CD4-positive, alpha-beta memory T cell (primary cell): ENCODE measurements at regions of chr15 and their contacts with region 1.

Region 1: DNA sequence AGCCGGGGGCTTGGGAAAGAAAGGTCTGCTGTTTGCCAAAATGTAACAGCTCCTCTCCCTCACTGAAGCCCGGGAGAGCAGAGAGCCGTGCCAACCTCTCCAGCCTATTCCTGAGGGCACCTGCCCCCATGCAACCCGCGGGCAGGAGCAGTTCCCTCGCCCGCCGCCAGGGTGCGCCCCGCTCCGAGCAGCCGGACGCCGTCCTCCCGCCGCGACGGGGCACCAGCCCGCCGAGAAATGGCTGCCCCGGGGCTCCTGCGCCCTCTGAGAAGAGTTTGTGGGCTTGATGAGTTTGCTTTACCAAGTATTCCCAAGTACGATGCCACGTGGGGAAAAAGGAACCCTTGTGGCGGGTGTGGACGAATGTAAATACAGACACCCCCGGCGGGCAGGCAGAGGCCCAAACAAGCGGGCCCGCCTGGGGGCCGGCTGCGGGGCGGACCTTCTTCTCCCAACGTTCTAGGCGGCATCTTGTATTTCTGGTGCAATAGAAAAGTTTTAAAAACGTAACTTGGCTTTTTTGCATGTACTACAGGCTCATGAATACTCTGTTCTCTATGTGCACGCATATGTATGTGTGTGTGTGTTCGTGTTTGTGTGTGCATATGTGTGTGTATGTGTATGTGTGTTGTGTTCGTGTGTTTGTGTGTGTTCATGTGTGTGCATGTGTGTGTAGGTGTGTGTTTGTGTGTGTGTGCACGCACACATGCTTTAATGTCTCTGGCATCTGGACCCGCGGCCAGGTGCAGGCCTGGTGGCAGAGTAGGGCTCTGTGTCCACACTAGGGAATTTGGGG is 162.9 kb downstream of the CHSY1 start:
- DNase-seq: peak; percentile 53 to 79 (median 67)
- H3K4me3 ChIP-seq: no peak overlapping the region
- H3K4me3 Mint-ChIP-seq: peak overlapping the region in 1 of 8 donors; percentile 49
- H3K27ac ChIP-seq: no peak overlapping the region
- H3K27ac Mint-ChIP-seq: no peak overlapping the region
- H3K4me1 ChIP-seq: no peaks in the 10 kb centered on the region
- H3K4me1 Mint-ChIP-seq: peaks cover 0 to 2% (median 0%) of the 10 kb centered on the region in 4 donors
- H3K27me3 ChIP-seq: no peaks in the 10 kb centered on the region
- H3K27me3 Mint-ChIP-seq: peaks cover 0 to 6% of the 10 kb centered on the region in 2 donors

Region 2: DNA sequence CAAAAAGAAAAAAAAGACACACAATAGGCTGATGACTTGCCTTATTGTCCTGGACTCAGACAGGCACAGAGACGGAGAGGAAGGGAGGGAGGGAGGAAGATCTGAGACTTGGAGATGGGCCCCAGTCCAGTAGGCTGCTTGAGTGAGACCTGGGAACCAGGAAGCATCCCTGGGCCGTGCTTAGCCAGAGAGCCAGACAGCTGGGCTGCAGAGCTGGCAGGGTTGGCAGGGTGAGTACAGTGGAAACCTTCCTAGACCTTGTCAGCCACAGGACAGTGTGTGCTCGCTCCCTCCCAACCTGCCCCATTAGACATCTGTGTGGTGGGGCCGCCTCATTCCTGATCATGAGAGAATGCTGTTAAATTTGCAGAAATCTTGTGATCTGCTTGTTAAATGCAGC is 317.2 kb before region 1 on chr15:
- CTCF ChIA-PET with region 1: no interaction called
- POLR2A ChIA-PET with region 1: no interaction called
- intact Hi-C with region 1: no loop called
- DNase-seq: no peak
- H3K4me3 ChIP-seq: no peak overlapping the region
- H3K4me3 Mint-ChIP-seq: no peak overlapping the region
- H3K27ac ChIP-seq: no peak overlapping the region
- H3K27ac Mint-ChIP-seq: no peak overlapping the region
- H3K4me1 ChIP-seq: no peaks in the 10 kb centered on the region
- H3K4me1 Mint-ChIP-seq: no peaks in the 10 kb centered on the region
- H3K27me3 ChIP-seq: no peaks in the 10 kb centered on the region
- H3K27me3 Mint-ChIP-seq: peaks cover 0 to 6% of the 10 kb centered on the region in 2 donors

Region 3: DNA sequence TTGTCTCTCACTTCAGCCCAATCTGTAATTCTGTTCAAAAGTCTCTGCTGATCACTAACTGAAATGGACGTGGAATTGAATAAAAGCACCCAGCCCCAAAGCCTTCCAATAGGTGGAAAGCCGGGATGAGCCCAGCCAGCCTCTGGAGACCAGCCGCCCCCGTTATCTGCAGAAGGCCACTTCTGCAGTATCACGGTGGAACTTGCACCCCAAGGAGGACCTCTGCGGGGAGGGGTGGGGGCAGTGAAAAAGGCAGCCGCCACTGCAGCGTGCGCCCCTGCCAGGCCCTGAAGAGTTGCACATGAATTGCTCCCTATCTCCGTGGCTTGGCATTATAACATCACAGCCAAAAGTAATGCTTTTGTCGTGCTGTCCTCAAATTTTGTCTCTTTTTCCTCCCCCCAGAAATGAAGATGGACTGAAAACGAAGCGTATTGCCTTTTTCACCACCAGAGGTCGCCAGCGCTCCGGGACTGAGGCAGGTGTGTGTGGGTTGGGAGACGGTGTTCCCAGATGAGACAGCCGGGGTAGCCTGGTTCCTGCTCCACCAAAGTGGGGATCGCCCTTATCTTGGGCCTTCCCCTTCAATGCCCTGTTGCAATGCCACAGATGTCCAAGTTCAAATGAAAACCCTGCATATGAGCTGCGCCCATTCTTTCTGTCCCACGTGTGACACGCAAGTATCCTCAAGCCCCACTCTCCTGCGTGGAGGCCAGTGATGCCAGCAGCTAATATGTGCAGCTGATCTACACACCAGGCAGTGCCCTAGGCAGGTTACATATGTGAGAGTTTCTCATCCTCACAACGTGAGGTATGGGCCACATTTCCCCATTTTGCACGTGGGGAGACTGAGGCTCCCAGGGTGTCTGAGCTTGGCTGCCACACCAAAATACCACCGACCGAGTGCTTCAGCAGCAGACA is 73.8 kb before region 1 on chr15:
- CTCF ChIA-PET with region 1: interaction called, 15 read pairs
- POLR2A ChIA-PET with region 1: no interaction called
- intact Hi-C with region 1: no loop called
- DNase-seq: peak; percentile 42 to 53 (median 51)
- H3K4me3 ChIP-seq: no peak overlapping the region
- H3K4me3 Mint-ChIP-seq: no peak overlapping the region
- H3K27ac ChIP-seq: no peak overlapping the region
- H3K27ac Mint-ChIP-seq: no peak overlapping the region
- H3K4me1 ChIP-seq: no peaks in the 10 kb centered on the region
- H3K4me1 Mint-ChIP-seq: peaks cover 0 to 5% (median under 1%) of the 10 kb centered on the region in 4 donors
- H3K27me3 ChIP-seq: no peaks in the 10 kb centered on the region
- H3K27me3 Mint-ChIP-seq: peaks cover 5 to 6% of the 10 kb centered on the region in 2 donors

Region 4: DNA sequence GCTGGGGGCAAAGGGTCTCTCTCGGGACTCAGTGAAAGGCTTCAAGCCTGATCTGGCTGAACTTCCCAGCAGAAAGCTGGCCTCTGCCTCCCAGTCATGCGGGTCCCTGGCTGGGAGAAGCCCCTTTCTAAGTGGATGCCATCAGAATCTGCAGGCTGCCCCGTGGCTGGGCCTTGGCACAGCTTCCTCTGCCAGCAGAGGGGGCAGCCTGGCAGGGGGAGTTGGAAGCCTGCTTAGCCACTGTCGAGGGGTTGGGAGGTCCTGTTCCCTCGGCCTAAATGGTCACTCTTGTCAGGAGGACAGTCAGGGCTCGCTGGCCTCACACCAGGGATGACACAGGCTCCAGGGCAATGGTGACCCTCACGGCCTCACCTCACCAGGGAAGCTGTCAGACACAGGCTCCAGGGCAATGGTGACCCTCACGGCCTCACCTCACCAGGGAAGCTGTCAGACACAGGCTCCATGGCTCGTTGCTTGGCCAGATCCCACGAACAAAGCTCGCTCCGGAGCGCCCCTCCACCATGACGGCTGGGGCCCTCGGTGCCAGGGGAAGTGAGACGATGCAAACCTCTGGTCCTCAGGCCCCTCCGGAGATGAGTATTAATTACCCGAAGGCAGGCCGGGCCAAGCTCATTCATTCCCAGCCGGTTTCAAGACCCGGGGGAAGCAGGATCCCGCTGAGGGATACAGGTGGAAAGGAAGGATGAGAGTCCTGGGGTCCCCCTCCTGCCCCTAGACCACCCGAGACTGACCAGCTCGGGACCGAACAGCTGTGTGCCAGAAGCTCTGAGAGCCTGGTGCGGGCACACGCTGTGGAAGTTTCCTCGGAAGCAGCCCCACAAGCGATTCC is 11.8 kb after region 1 on chr15:
- CTCF ChIA-PET with region 1: interaction called, 12 read pairs
- POLR2A ChIA-PET with region 1: no interaction called
- intact Hi-C with region 1: no loop called
- DNase-seq: no peak
- H3K4me3 ChIP-seq: no peak overlapping the region
- H3K4me3 Mint-ChIP-seq: no peak overlapping the region
- H3K27ac ChIP-seq: no peak overlapping the region
- H3K27ac Mint-ChIP-seq: no peak overlapping the region
- H3K4me1 ChIP-seq: no peaks in the 10 kb centered on the region
- H3K4me1 Mint-ChIP-seq: peaks cover 0 to 1% (median 0%) of the 10 kb centered on the region in 4 donors
- H3K27me3 ChIP-seq: no peaks in the 10 kb centered on the region
- H3K27me3 Mint-ChIP-seq: peaks cover 1 to 3% of the 10 kb centered on the region in 2 donors

Region 5: DNA sequence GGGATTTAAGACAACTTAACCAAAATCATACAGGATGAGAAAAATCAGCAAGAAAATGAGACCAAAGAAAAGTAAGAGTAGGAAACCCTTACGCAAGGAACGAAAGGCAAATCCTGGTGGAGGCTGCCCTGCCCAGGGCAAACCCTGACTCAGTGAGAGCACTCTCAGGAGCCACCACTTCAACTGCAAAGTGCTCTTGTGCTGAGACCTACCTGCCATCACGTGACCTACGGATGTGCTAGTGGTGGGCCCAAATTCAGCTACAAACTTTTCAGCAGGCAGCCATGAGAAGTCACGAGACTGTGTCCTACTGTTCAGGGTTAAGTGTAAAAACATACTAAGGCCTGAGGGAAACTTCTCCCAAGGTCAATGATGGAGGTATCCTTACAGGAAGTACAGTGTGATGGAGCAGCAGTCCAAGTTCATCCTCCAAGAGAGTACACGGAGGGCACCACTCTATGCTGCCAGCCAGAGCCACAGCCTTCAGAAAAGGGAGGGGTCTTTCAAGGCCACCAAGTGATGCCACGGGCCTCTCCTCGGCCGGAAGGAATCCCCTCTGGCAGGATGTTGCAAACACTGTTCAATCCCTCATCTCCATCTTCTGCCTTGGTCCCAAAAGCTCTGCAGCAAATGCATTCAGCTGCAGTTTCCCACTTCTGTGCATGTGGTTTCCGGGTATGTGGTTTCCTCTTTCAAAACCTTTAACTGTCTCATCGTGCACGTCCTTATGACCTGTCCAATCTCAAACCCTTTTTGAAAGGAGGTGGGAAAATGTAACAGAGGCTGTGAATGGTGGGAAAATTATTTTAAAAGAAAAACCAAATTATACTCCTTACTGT is 153.4 kb after region 1 on chr15:
- CTCF ChIA-PET with region 1: interaction called, 19 read pairs
- POLR2A ChIA-PET with region 1: no interaction called
- intact Hi-C with region 1: no loop called
- DNase-seq: peak; percentile 78 to 88 (median 80)
- H3K4me3 ChIP-seq: peak overlapping the region in 1 of 2 donors; percentile 57
- H3K4me3 Mint-ChIP-seq: peak overlapping the region; percentile 64 to 89 (median 80)
- H3K27ac ChIP-seq: peak overlapping the region; percentile 49
- H3K27ac Mint-ChIP-seq: peak overlapping the region; percentile 82 to 97 (median 89)
- H3K4me1 ChIP-seq: peaks cover 87% of the 10 kb centered on the region
- H3K4me1 Mint-ChIP-seq: peaks cover 67 to 96% (median 78%) of the 10 kb centered on the region in 4 donors
- H3K27me3 ChIP-seq: no peaks in the 10 kb centered on the region
- H3K27me3 Mint-ChIP-seq: no peaks in the 10 kb centered on the region

Region 6: DNA sequence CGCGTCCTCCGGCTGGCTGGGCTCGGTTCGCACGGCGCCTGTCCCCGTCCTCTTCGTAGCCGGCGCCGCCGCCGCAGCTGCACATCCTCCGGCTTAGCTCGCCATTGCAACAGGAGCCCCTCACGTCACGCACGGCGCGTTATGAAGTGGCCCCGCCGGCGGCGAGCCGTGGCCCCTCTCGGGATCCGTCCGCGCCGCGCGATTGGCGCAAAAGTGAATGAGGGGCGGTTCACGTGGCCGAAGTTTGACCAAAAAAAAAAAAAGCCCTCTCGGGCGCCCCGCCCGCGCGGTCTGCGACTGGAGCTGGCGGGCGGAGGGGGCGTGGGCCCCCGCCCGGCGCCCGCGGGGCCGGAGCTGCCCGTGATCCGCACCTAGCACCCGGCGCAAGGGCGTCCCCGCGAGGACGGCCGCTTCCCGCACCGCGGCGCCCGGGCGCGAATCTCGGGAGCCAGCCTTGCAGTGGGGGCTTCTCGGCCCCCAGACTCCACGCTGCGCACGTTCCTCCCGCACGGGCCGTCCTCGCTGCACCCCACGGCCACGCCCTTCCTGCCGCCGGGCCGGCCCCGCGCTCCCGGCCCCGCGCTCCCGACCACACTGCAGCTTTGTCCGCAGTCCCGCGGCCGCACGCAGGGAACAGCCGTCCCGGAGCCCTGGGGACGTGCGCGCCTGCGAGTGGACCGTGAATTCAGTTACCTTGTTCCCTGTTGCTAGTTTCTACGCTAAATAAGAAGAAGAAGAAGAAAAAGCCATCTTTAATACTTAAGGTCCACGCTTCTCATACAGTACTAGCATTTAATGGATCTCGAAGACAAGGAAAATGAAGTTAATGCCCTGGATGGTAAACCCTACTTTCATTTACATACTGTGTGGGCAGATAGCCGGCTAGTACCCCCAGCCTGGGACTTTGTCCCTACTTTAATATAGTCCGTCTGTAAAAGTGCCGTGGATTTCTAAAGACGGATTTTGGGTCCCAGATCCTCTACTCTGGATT is 163.1 kb after region 1 on chr15 and contains the start of gene CHSY1:
- CTCF ChIA-PET with region 1: interaction called, 40 read pairs
- POLR2A ChIA-PET with region 1: no interaction called
- intact Hi-C with region 1: no loop called
- DNase-seq: peak; percentile 81 to 90 (median 86)
- H3K4me3 ChIP-seq: peak within 1 kb of the TSS; percentile 30 to 66
- H3K4me3 Mint-ChIP-seq: peak within 1 kb of the TSS; percentile 94 to 96 (median 95)
- H3K27ac ChIP-seq: peak within 1 kb of the TSS; percentile 42
- H3K27ac Mint-ChIP-seq: peak within 1 kb of the TSS; percentile 90 to 95 (median 93)
- H3K4me1 ChIP-seq: peaks cover 39% of the 10 kb centered on the region
- H3K4me1 Mint-ChIP-seq: peaks cover 29 to 43% (median 31%) of the 10 kb centered on the region in 4 donors
- H3K27me3 ChIP-seq: no peaks in the 10 kb centered on the region
- H3K27me3 Mint-ChIP-seq: no peaks in the 10 kb centered on the region
- total RNA-seq, gene CHSY1: 11.1 to 11.9 TPM